Posterior cingulate gyrus (tissue), 11 donors: ENCODE measurements at regions of chr12 and their contacts with region 1.

Region 1: GRCh38 chr12:93813972-93814821 is 137.0 kb downstream of the CRADD start:
- DNase-seq: peak in 9 of 10 donors; percentile 16 to 88 (median 42)

Region 2: GRCh38 chr12:93778306-93778705 is 35.9 kb before region 1 on chr12:
- intact Hi-C with region 1: loop called (anchors 5 kb)
- DNase-seq: peak in 3 of 10 donors; percentile 7 to 23 (median 15)

Region 3: DNA sequence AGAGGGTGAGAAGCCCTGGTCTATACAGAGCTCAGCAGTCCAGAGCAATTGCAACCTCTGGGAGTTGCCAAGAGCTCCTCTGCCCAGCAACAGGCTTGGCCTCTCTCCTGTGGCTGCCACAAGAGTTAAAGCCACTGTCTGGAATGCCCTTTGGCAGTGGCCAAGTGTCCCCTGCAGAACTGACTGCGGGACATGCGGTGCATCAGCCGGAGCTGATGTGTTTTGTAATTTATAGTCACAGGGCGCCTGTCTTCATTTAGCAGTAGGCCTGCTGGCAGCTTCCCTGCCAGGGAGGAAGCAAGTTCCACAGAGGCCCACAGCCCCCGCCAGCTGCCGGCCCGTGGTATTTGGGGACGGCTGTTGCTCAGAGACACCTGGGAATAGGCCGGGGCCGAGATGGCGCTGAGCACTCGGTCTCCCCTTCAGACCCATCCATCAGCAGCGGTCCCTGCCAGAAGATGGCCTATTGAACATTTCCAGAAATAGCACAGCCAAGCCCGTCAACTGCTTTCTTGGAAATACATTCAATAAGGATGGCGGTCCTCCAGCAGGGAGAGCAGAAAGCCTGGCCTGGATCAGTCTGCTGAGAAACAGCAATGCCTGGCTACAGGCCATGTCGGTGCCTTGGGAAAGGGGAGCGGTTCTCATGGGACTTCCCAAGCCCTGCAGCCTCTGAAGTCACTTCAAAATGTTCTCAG is 80.3 kb after region 1 on chr12:
- intact Hi-C with region 1: loop called (anchors 10 kb)
- DNase-seq: peak; percentile 51 to 95 (median 70)